Psoas muscle (tissue), 8 donors: ENCODE measurements at regions of chr18 and their contacts with region 1.

Region 1: DNA sequence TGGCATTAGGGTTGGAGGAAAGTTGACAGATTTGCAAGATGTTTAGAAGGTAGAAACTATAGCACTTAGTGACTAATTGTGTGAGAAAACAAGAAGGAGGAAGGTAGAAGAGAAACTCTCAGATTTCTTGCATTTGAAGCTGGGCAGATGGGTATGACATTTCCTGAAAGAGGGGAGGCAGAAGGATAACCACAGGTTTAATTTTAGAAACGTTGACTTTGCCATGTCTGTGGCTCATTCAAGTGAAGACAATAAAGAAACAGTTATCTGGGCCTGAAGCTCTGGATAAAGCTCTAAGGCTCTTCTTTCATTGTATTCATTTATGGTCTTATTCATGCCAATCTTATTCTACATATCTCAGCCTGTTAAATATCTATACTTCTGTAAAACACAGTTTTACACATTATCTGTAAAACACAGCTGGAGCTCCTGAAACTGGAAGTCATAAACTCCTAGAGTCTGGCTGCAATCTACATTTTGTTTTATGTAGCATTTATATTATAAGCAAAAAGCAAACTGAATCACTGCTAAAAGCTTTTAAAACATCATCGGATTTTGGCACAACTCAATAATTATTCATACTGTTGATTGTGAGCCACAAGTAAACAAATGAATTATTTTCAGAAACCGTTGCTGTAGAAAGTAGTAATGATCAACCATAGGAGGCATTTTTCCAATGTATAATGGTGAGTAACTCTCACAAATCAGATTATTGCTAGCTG is 138.5 kb downstream of the RIT2 start:
- DNase-seq: no peak
- ATAC-seq: no peak
- H3K4me3 ChIP-seq: no peak overlapping the region
- H3K27ac ChIP-seq: no peak overlapping the region
- H3K4me1 ChIP-seq: no peaks in the 10 kb centered on the region
- H3K27me3 ChIP-seq: no peaks in the 10 kb centered on the region
- CTCF ChIP-seq: no peak

Region 2: DNA sequence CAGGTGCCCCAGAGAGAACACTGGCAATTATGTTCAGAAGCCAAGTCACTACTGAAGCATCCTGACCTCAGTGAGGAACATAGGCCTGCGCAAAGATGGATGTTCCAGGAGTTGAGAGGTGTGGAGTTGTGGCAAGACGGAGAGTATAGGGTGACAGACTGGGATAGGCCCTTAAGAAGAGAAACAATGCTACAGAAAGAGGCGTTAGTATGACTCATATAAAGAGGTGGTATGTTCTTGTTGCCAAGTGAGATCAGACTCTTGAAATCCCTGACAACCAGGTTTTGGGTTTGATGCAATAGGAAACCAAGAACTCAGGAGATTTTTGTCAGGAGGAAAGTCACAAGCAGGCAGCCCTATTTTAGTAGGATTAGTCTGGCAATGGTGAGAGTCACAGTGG is 47.2 kb before region 1 on chr18:
- intact Hi-C with region 1: loop called in 1 of 2 experiments (anchors 10 kb)
- DNase-seq: no peak
- ATAC-seq: no peak
- H3K4me3 ChIP-seq: no peak overlapping the region
- H3K27ac ChIP-seq: no peak overlapping the region
- H3K4me1 ChIP-seq: no peaks in the 10 kb centered on the region
- H3K27me3 ChIP-seq: no peaks in the 10 kb centered on the region
- CTCF ChIP-seq: no peak